ENCODE measurements at regions of chr3 and their contacts with region 1.

Region 1: GRCh38 chr3:42839616-42840015 is 30.4 kb downstream of the ACKR2 start:
- DNase-seq: no peak
- ATAC-seq: peak; percentile 84

Region 2: GRCh38 chr3:42780892-42781700 is 58.5 kb before region 1 on chr3:
- intact Hi-C with region 1: loop called (anchors 2 kb)
- DNase-seq: no peak
- ATAC-seq: peak; percentile 64